Activated CD4-positive, alpha-beta T cell treated with anti-CD3 and anti-CD28 coated beads, Interleukin-2, amount 10 ng/mL, durations not matched to agents 24 days and 14 days (primary cell): ENCODE measurements at regions of chr16 and their contacts with region 1.

Region 1: GRCh38 chr16:31073968-31074813 is at the starts of genes ZNF646 and ZNF668:
- DNase-seq: peak; percentile 99
- H3K4me3 Mint-ChIP-seq: peak within 1 kb of the TSS; percentile 90
- H3K27ac Mint-ChIP-seq: peak within 1 kb of the TSS; percentile 93
- H3K4me1 Mint-ChIP-seq: peaks cover 31% of the 10 kb centered on the region
- H3K27me3 Mint-ChIP-seq: no peaks in the 10 kb centered on the region
- total RNA-seq, gene ZNF646: 21.1 and 23.3 TPM in 2 replicates
- total RNA-seq, gene ZNF668: 15.6 and 15.9 TPM in 2 replicates

Region 2: DNA sequence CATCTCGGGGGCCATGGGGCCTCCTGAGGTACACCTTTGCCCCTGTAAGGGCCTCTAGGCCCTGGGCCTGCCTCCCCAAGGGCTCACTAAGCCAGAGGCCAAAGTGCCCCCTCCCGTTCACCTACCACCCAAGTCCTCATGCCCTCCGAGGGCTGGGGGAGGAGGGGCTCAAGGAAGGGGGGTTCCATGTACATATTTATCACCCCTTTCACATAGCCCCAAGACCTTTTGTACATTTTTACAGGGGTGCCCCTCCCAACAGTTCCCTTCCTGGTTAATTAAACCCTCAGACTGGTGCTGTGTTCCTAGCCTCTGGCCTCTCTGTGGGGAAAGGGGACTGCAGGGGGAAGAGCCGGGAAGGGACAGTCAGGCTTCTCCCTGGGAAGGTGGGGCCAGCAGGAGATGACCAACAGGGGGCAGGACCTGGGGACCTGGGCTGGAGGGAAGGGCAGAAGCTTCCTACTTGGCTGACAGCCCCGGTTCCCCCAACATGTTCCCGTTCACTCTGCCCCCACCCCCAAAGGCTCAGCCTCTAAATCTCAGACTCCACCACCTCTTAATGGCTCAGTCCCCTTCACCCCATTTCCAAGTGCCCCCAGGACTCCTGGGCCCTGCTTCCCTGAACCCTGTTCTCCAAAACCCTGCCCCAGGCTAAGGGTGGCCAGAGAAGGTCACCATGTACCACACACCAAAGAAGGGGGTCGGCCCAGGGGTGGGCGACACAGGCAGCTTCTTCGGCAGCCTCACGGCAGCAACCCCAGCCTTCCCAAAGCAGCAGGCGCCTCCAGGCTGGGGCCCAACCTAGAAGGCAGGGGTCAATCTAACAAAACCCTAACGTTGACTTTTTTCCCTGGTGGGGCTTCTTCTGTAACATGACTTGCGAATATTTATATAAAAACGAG is 404.0 kb before region 1 on chr16:
- intact Hi-C with region 1: no loop called
- DNase-seq: no peak
- H3K4me3 Mint-ChIP-seq: no peak overlapping the region
- H3K27ac Mint-ChIP-seq: no peak overlapping the region
- H3K4me1 Mint-ChIP-seq: peaks cover 5% of the 10 kb centered on the region
- H3K27me3 Mint-ChIP-seq: no peaks in the 10 kb centered on the region

Region 3: DNA sequence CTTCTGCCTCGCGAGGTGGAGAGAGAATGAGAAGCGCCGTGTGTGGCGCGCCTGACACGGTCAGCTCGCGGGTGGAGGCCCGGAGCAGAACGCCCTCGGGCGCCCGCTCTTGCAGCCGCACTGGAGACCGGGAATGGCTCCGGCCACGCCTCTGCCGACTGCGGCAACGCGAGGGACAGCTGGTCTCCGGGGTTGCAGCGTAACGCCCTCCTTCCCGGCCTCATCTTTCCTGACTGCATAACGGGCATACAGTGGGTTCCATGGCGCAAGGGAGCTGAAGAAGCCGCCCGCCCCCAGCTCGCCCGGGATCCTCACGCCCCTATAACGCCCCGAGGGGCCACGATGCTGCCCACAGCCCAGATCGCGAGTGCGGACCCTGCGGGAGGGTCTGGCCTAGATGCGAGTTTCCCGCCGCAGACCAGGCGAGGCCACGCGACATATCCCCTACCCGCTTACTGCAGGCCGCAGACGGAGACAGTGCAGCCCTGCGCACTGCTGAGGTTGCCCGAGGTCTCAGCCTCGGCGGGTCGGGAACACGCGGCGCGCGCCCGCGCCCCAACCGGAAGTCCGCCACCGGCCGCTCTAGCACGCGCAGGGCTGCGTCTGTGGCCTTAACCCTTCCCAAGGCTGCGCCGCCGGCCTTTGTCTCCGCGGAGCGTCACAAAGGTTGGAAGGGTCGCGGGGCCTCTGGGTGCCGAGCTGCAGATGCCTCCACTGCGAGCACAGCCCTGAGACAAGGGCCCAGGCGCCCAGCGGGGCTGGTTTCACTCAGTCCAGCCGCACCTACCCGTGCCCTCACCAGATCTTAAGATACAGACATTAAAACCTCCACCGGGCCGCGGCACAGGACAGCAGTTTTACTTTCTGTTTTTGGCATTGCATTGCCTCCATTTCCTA is 199.1 kb before region 1 on chr16:
- intact Hi-C with region 1: loop called (anchors 1 kb)
- DNase-seq: peak; percentile 97
- H3K4me3 Mint-ChIP-seq: peak overlapping the region; percentile 96
- H3K27ac Mint-ChIP-seq: peak overlapping the region; percentile 86
- H3K4me1 Mint-ChIP-seq: peaks cover 24% of the 10 kb centered on the region
- H3K27me3 Mint-ChIP-seq: no peaks in the 10 kb centered on the region

Region 4: DNA sequence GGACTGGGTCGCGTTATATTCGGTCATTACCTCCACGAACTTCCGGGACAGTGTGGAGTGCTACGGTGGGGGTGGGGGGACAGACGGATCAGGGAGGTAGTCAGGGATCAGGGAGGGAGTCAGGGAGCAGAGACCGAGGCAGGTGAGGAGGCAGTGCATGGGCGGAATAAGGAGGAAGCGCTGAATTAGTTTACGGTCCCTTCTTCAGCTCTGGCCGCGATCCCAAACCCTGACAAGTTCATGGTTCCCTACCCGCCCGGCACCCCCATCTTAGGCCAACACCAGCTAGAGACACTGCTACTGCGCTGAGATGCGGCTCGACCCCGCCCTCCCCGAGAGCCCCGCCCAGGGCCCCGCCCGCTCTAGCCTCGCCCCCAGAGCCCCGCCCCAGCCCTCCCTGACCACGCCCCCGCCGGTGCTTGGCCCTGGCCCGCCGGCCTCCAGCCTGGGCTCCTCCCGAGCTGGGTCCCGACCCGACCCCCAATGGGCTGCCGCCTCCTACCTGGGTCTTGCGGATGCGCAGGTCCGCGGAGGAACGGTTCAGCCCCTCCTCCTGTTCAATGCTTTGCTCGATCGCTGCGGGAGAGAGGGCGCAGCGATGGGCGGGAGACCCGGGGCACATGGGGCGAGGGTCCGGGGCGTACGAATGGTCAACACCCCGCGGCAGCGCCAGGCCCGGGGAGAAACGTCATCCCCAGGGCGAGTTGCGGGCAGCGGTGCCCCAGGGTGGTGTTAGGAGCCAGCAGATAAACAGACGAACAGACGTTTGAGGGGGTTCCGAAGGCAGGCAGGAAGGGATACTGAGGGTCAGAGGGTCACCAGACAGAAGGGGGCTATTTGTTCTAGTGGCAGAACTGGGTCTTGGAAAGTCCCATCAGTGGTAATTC is 76.9 kb before region 1 on chr16:
- intact Hi-C with region 1: loop called (anchors 2 kb)
- DNase-seq: peak; percentile 90
- H3K4me3 Mint-ChIP-seq: peak overlapping the region; percentile 85
- H3K27ac Mint-ChIP-seq: peak overlapping the region; percentile 71
- H3K4me1 Mint-ChIP-seq: peaks cover 7% of the 10 kb centered on the region
- H3K27me3 Mint-ChIP-seq: peaks cover 1% of the 10 kb centered on the region

Region 5: GRCh38 chr16:31108035-31108793 is 34.0 kb after region 1 on chr16 and contains the start of gene BCKDK:
- intact Hi-C with region 1: loop called (anchors 5 kb)
- DNase-seq: peak; percentile 93
- H3K4me3 Mint-ChIP-seq: peak within 1 kb of the TSS; percentile 92
- H3K27ac Mint-ChIP-seq: peak within 1 kb of the TSS; percentile 95
- H3K4me1 Mint-ChIP-seq: peaks cover 22% of the 10 kb centered on the region
- H3K27me3 Mint-ChIP-seq: no peaks in the 10 kb centered on the region
- total RNA-seq, gene BCKDK: 44.3 and 44.9 TPM in 2 replicates

Region 6: DNA sequence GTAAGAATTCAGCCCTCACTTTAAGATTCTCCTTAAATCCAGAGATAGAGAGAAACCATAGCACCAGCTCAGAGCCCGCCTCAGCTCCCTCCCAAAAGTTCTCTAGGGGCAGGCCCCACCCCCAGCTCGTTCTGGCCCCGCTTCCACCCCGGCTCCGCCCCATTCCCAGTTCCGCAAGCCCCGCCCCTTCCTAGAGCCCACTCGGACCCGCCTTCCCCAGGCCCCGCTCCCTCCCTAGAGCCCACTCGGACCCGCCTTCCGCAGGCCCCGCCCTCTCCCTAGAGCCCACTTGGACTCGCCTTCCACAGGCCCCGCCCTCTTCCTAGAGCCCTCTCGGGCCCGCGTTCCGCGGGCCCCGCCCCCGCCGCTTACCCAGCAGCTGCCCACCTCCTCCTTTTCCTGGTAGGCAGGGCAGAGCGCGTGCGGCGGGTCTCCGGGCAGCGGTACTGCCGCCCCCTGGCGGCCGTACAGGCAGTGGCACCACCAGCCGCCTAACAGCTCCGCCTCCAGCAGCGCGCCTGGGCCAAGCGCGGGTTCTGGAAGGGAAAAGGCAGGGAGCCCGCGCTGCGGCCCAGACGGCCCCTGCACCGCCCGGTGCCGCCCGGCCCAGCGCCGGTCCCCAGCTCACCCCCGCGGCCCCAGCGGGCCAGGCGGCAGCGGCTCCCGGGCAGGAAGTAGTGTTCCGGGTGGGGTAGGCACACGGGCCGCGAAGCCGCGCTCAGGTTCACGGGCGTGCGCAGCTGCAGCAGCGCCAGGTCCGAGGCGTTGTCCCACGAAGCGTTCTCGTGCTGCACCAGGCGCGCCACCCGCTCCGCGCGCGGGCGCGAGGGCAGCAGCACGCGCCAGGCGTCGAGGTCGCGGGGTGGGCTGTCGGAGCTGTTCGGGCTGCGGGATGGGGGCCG is 68.2 kb after region 1 on chr16:
- intact Hi-C with region 1: loop called (anchors 1 kb)
- DNase-seq: peak; percentile 99
- H3K4me3 Mint-ChIP-seq: peak overlapping the region; percentile 69
- H3K27ac Mint-ChIP-seq: peak overlapping the region; percentile 82
- H3K4me1 Mint-ChIP-seq: peaks cover 8% of the 10 kb centered on the region
- H3K27me3 Mint-ChIP-seq: no peaks in the 10 kb centered on the region

Region 7: GRCh38 chr16:31868691-31869167 is 794.5 kb after region 1 on chr16:
- intact Hi-C with region 1: loop called (anchors 1 kb)
- DNase-seq: peak; percentile 94
- H3K4me3 Mint-ChIP-seq: peak overlapping the region; percentile 75
- H3K27ac Mint-ChIP-seq: peak overlapping the region; percentile 95
- H3K4me1 Mint-ChIP-seq: peaks cover 53% of the 10 kb centered on the region
- H3K27me3 Mint-ChIP-seq: peaks cover 5% of the 10 kb centered on the region